ENCODE measurements at regions of chr7 and their contacts with region 1.

Region 1: DNA sequence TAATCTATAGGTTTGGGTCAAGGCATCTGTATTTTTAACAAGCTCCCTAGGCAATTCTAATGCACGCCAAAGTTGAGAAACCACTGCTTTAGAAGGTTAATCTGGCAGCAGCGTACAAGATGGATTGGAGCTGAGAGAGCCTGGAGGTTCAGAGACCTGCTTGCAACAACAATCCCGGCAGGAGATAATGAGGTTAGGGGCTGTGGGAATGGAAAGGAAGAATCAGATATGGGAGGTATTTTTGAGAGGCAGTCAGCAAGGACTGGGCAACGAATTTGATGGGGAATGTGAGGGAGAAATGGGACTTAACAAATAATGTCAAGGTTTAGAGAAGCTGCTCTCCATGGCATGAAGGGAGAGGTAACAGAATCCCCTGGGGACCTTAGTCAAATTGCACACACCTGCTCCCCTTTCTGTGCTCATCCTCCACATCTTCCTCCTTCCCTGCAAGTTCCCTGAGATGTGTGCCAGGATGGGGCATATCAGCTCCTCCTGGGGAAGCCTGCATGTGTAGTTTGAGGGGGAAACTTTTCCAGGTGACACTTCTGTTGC is 731.0 kb upstream of the GALNT17 start:
- DNase-seq: no peak
- ATAC-seq: no peak
- H3K4me3 ChIP-seq: no peak overlapping the region
- H3K27ac ChIP-seq: no peak overlapping the region
- H3K4me1 ChIP-seq: no peaks in the 10 kb centered on the region
- H3K27me3 ChIP-seq: no peaks in the 10 kb centered on the region
- CTCF ChIP-seq: no peak
- EP300 ChIP-seq: no peak
- POLR2A ChIP-seq: no peak
- RAD21 ChIP-seq: no peak

Region 2: GRCh38 chr7:70415179-70415972 is 14.5 kb after region 1 on chr7:
- CTCF ChIA-PET with region 1: interaction called, 3 read pairs
- POLR2A ChIA-PET with region 1: no interaction called
- RAD21 ChIA-PET with region 1: no interaction called
- SMC1A ChIA-PET with region 1: interaction called, 10 read pairs
- in situ Hi-C with region 1: no loop called
- intact Hi-C with region 1: no loop called
- DNase-seq: no peak
- ATAC-seq: peak; percentile 87
- H3K4me3 ChIP-seq: 0 out of 2 replicates have a peak overlapping the region, but pooled peaks have one; percentile 15
- H3K27ac ChIP-seq: peak overlapping the region; percentile 50
- H3K4me1 ChIP-seq: peaks cover 14% of the 10 kb centered on the region
- H3K27me3 ChIP-seq: no peaks in the 10 kb centered on the region
- CTCF ChIP-seq: no peak
- EP300 ChIP-seq: no peak
- POLR2A ChIP-seq: no peak
- RAD21 ChIP-seq: no peak

Region 3: DNA sequence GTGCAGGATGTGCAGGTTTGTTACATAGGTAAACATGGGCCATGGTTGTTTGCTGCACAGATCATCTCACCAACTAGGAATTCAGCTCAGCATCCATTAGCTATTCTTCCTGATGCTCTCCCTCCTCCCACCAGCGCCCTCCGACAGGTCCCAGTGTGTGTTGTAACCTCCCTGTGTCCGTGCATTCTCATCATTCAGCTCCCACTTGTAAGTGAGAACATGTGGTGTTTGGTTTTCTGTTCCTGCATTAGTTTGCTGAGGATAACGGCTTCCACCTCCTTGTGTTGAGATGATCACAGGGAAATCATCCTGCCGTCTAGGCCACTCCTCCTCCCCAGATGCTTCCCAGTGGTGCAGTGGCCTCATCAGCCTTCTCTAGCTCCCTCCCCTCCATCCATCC is 469.4 kb after region 1 on chr7:
- CTCF ChIA-PET with region 1: no interaction called
- POLR2A ChIA-PET with region 1: no interaction called
- RAD21 ChIA-PET with region 1: no interaction called
- SMC1A ChIA-PET with region 1: no interaction called
- in situ Hi-C with region 1: no loop called
- intact Hi-C with region 1: no loop called
- DNase-seq: no peak
- ATAC-seq: no peak
- H3K4me3 ChIP-seq: no peak overlapping the region
- H3K27ac ChIP-seq: no peak overlapping the region
- H3K4me1 ChIP-seq: no peaks in the 10 kb centered on the region
- H3K27me3 ChIP-seq: no peaks in the 10 kb centered on the region
- CTCF ChIP-seq: no peak
- EP300 ChIP-seq: no peak
- POLR2A ChIP-seq: no peak
- RAD21 ChIP-seq: no peak